Esophagus squamous epithelium (tissue), 5 donors: ENCODE measurements at regions of chr1 and their contacts with region 1.

Region 1: DNA sequence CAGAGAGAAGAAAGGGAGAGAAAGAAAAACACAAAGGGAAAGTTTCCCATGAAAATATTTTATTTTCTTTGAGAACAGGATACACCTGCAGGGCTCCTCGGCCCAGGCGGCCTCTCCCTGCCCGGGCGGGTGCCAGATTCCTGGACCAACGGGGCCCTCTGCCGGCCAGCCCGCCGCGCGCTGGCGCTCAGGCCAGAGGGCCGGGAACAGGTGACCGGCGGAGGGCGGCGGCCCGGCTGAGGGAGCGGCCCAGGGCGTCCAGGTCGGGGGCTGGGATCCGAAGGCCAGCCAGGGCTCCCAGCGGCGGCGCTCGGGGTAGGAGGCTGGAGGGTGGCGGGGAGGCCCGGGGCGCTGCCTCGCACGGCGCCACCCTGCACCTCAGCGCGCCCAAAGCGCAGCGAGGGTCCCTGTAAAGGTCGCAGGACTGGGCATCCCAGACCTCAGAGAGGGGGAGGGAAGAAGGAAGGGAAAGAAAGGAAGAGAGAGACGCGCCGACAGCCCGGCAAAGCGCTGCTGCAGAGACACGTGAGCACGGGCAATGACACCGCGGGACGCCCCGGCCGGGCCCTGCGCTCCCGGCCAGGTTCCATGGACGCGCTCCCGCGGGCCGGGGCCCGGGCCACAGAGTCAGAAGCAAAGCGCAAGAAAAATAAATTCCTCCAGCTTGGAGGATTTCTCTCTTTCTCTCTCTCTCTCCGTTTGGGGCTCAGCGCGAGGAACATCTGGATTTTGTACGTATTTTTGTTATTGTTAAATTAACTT is 927 bp downstream of the WNT9A start:
- DNase-seq: no peak
- H3K4me3 ChIP-seq: peak overlapping the region; percentile 43 to 79 (median 61)
- H3K27ac ChIP-seq: peak overlapping the region; percentile 85 to 93 (median 87)
- H3K4me1 ChIP-seq: peaks cover 32 to 76% (median 33%) of the 10 kb centered on the region in 3 donors
- H3K27me3 ChIP-seq: peaks cover 0 to 40% (median 0%) of the 10 kb centered on the region in 4 donors
- CTCF ChIP-seq: peak; percentile 48 to 90 (median 81)
- POLR2A ChIP-seq: no peak

Region 2: DNA sequence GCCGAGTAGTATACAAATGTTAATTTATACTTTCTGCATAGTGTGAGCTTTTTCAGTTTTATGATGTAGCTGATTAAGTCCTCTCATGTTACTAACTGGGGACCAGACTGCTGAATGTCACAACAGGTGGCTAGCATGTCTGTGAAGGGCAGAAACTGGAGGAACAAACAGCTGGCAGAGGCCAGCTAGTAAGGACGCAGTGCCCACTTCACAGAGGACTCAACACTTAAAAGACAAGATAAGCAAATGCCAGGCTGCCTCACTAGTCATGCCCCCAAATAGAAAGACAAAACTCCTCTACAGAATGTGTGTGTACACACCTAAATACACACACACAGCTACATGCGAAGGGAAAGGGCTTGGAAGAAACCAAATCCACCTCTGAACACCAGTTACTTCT is 457.2 kb before region 1 on chr1:
- intact Hi-C with region 1: loop called (anchors 5 kb)
- DNase-seq: no peak
- H3K4me3 ChIP-seq: no peak overlapping the region
- H3K27ac ChIP-seq: no peak overlapping the region
- H3K4me1 ChIP-seq: no peaks in the 10 kb centered on the region
- H3K27me3 ChIP-seq: no peaks in the 10 kb centered on the region
- CTCF ChIP-seq: no peak
- POLR2A ChIP-seq: no peak

Region 3: GRCh38 chr1:227762233-227762911 is 184.4 kb before region 1 on chr1:
- intact Hi-C with region 1: loop called (anchors 5 kb)
- DNase-seq: peak; percentile 21
- H3K4me3 ChIP-seq: no peak overlapping the region
- H3K27ac ChIP-seq: peak overlapping the region; percentile 0 to 26 (median 20)
- H3K4me1 ChIP-seq: peaks cover 20 to 46% (median 32%) of the 10 kb centered on the region in 3 donors
- H3K27me3 ChIP-seq: peaks cover 0 to 10% (median 0%) of the 10 kb centered on the region in 4 donors
- CTCF ChIP-seq: peak; percentile 82 to 93 (median 88)
- POLR2A ChIP-seq: no peak